PC-3 (cell line): ENCODE measurements at regions of chr9 and their contacts with region 1.

Region 1: GRCh38 chr9:137029058-137029936 is 1.3 kb upstream of the ABCA2 start:
- DNase-seq: peak; percentile 66
- ATAC-seq: peak; percentile 59
- H3K4me3 ChIP-seq: peak overlapping the region; percentile 68; the same call in 1 of the 2 replicates
- H3K27ac ChIP-seq: no peak overlapping the region
- H3K4me1 ChIP-seq: peaks cover 13% of the 10 kb centered on the region; the same call in 1 of the 2 replicates
- H3K27me3 ChIP-seq: no peaks in the 10 kb centered on the region
- CTCF ChIP-seq: peak; percentile 80

Region 2: DNA sequence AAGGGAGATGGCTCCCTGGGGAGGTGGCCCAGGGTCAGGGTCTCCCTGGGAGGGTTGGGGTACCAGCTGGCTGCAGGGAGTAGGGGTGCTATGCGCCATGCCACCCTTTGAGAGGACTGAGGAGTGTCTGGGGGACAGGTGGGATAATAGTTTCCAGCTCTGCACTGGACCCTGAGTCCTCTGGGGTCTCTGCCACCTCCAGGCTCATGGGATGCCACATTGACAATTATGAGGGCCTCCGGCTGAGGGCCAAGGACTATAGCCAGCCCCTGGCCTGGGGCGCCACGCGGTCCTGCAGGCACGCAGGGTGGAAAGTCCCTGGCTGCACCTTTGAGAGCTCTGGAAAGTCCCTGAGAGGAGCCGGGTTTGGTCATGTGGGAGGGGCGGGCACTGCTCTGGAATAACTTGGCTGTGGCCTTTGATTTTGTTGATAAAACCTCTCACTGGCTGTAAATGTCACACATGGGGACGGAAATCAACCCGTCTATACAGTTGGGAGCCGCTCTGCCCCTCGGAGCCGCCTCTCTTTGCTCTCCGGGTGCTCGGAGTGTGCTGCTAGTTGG is 127.0 kb before region 1 on chr9:
- CTCF ChIA-PET with region 1: no interaction called
- POLR2A ChIA-PET with region 1: no interaction called
- intact Hi-C with region 1: loop called (anchors 5 kb)
- DNase-seq: peak; percentile 67
- ATAC-seq: peak; percentile 65
- H3K4me3 ChIP-seq: peak overlapping the region; percentile 7; the same call in 1 of the 2 replicates
- H3K27ac ChIP-seq: peak overlapping the region; percentile 99
- H3K4me1 ChIP-seq: peaks cover 31% of the 10 kb centered on the region
- H3K27me3 ChIP-seq: no peaks in the 10 kb centered on the region
- CTCF ChIP-seq: no peak

Region 3: GRCh38 chr9:137000177-137000883 is 29.0 kb before region 1 on chr9:
- CTCF ChIA-PET with region 1: interaction called, 12 read pairs
- POLR2A ChIA-PET with region 1: no interaction called
- intact Hi-C with region 1: no loop called
- DNase-seq: no peak
- ATAC-seq: no peak
- H3K4me3 ChIP-seq: no peak overlapping the region
- H3K27ac ChIP-seq: no peak overlapping the region
- H3K4me1 ChIP-seq: peaks cover 18% of the 10 kb centered on the region
- H3K27me3 ChIP-seq: no peaks in the 10 kb centered on the region
- CTCF ChIP-seq: no peak

Region 4: DNA sequence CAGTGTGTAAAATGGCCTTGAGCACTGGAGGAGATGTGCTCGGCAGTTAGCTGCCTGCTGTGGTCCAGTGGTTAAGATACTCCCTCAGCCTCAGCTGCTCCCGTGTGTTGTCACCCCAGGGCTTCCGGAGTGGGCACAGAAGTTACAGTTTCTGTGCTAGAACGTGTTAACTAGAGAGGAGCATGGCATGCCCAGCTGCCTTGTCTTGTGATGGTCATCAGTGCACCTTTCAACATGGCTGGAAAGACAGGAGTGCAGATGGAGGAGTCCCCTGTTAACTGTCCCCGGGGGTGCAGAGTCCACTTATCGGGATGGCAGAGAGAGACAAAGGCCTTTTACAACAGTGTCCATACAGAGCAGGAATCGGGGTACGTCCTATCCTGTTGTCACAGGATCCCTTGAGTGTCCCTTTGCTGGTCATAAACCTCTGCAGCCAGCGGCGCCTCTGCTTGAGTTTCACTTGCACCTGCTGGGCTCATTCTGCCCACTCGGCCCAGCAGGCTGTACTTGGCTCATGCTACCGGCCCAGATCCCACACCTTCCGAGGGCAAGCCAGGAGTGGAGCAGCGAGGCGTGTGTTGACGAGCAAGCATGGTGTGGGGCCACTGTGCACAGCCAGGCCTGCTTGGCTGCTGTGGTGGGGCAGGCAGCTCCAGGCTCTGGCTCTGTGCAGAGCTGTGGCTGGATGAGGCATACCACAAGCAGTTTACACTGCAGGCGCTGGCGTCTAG is 702.1 kb after region 1 on chr9:
- CTCF ChIA-PET with region 1: no interaction called
- POLR2A ChIA-PET with region 1: no interaction called
- intact Hi-C with region 1: no loop called
- DNase-seq: no peak
- ATAC-seq: no peak
- H3K4me3 ChIP-seq: no peak overlapping the region
- H3K27ac ChIP-seq: no peak overlapping the region
- H3K4me1 ChIP-seq: no peaks in the 10 kb centered on the region
- H3K27me3 ChIP-seq: no peaks in the 10 kb centered on the region
- CTCF ChIP-seq: no peak